Left colon (tissue), 2 donors: ENCODE measurements at regions of chr5 and their contacts with region 1.

Region 1: DNA sequence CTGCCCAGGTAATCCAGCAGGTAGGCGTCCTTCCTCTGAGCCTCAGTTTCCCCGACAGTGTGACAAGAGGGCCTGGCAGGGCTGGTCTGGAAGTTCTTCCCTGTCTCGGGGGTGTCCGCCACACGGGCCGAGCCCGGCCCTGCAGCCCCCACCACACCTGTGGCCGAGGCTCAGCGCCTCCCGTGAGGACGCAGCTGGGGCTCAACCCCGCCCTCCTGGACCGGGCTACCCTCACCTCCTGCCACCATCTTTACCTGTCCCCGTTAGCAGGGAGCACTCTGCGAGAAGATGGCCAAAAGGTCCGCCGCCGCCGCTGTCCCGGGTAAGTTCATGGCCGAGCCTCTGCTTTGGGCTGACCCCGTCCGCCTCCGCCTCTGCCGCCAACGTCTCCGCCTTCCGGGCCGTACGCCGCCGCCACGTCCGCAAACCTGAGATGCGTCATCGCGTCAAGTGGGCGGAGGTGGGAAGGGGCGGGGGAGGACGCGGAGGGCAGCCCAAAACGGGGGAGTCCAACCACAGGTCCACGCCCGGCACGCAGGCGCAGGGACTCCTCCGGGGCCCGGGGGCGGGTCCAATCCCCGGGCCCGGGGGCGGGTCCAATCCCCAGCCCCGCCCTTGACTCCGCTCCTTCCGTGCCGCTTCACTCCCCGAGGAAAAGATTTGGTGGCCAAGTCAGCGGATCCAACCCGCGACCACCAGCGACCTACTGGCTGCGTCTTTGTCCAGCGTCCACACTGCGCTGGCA is at the start of gene LYSMD3:
- DNase-seq: peak; percentile 98
- ATAC-seq: peak; percentile 96
- total RNA-seq, gene LYSMD3: 20.5 to 23.8 TPM

Region 2: DNA sequence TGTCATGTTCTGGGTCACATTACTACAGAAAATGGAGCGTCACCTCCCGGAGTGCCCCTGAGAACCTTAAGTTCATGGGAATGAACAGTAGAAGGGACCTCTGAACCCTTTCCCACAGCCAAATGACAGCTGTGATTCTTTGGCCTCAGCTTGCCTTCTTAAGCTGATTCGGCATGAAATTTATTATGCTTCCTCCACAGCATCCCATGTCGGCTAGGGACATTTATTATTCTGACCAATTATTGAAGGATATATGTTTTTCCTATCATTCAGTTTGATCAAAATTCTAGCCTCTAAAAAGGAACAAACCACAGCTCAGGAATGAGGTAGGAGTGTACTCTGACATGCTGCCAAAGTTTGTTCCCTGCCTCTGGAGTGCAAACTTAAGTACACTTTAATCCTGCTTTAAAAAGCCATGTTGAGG is 560.4 kb before region 1 on chr5:
- intact Hi-C with region 1: no loop called
- DNase-seq: no peak
- ATAC-seq: no peak

Region 3: DNA sequence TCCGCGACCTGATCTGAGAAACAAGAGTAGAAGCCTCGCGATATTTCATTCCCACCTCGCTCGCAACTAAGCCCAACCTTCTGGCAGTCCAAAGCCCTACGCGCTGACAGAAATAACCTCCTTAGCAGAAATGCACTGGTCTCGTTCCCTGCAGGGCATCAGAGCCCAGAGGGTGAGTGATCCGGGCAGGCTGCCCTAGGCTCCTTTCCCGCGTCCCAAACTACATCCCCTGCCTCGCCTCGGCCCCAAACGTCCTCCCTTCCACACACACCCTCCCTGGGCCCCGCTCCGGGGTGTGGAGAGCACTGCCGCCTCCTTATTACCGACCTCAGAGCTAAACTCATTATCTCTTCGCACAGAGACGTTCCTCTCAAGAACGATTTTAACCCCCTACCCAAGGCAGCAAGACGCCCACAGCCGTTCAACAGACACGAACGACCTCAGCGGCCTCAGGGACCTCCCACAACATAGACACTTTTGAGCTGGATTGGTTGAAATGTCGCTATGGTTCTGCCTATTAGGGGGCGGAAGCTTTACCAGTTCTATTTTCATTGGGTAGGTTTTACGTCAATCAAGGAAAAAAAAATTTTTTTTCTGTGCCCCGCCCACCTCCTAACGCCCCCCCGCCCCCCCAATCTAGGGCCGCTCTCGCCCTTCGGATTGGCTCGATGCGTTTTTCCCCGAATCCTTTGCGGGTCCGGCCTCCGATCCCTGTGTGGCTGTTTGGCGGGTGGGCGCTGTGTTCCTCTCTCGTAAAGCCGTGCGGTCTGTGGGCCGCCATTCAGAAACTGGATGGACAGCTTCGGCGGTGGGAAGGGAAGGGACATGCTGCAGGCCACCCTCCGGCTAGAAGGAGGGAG is 119.8 kb before region 1 on chr5 and contains the start of gene CETN3:
- intact Hi-C with region 1: loop called in 1 of 2 experiments (anchors 10 kb)
- DNase-seq: peak; percentile 93 to 96
- ATAC-seq: peak; percentile 92
- total RNA-seq, gene CETN3: 15.0 to 16.5 TPM

Region 4: GRCh38 chr5:90434116-90434714 is 95.2 kb before region 1 on chr5:
- intact Hi-C with region 1: no loop called
- DNase-seq: peak in 1 of 2 donors; percentile 60
- ATAC-seq: peak; percentile 71

Region 5: DNA sequence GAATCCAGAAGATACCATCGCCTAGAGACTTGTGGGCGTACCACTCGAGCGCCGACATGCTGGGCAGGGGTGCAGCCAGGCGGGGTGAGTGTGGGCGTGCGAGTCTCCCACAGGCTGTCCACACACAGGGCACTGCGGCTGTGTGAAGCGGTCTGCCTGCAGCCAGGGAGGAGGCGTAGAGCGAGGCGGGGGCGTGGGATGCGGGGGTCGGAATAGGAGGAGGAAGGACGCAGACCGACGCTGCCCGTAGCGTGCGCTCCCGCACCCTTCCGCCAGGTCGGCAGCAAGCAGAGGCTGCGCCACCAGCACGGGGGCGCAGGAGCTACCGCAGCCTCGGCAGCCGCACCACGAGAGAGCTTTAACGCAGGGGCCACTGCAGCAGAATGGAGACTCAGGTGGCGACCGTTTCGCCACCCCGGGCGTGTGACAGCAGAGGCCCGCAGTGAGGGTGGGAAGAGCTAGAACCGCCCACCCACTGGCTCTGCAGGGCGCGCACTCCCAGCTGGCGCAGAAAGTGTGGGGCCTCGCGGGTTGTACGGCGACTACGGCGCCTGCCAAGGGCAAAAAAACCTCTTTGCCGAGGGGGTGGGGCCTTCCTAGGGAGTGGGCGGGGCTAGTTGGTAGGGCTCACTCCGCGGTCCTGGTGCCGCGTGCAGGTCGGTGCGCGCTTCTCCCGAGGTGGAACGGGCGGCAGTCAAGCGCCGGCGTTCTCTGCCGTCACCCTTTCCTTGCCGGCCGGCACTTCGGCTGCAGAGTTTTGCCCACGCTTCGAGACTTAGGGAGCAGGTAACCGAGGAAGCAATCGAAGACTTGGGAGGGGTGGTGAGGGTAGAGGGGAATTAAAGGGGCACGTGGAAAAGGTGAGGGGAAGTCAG is 54.9 kb before region 1 on chr5 and contains the starts of genes MBLAC2 and POLR3G:
- intact Hi-C with region 1: loop called in 1 of 2 experiments (anchors 10 kb)
- DNase-seq: peak; percentile 95 to 96
- ATAC-seq: peak; percentile 94
- total RNA-seq, gene MBLAC2: 4.1 to 4.5 TPM
- total RNA-seq, gene POLR3G: 1.3 to 1.4 TPM

Region 6: DNA sequence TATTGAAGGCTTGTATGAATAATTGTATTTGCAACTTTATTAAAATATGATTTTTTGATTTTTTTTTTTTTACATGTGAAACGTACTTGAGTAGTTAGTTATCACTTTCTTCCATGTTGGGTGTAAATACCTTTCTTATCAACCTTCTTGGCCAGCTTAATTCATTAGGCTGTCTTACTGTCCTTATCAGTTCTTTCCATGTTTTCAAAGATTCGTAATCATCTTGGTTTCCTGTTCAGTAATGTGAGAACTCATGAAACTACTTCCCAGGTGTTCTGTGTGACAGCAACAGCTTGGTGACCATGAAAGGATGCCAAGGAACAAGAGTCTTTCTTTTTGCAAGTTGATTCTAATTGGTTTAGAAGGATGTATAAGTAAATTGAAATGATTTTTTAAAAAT is 129.3 kb after region 1 on chr5:
- intact Hi-C with region 1: no loop called
- DNase-seq: no peak
- ATAC-seq: no peak

Region 7: GRCh38 chr5:90861843-90862586 is 332.6 kb after region 1 on chr5:
- intact Hi-C with region 1: no loop called
- DNase-seq: no peak
- ATAC-seq: no peak